ENCODE measurements at regions of chr17 and their contacts with region 1.

Region 1: GRCh38 chr17:16521070-16521727 is 29.2 kb upstream of the LRRC75A start:
- DNase-seq: peak; percentile 75
- H3K4me3 Mint-ChIP-seq: no peak overlapping the region
- H3K27ac Mint-ChIP-seq: no peak overlapping the region
- H3K4me1 Mint-ChIP-seq: peaks cover 6% of the 10 kb centered on the region
- H3K27me3 Mint-ChIP-seq: peaks cover 24% of the 10 kb centered on the region

Region 2: GRCh38 chr17:16319969-16320368 is 201.2 kb before region 1 on chr17:
- CTCF ChIA-PET with region 1: no interaction called
- POLR2A ChIA-PET with region 1: no interaction called
- intact Hi-C with region 1: no loop called
- DNase-seq: no peak
- H3K4me3 Mint-ChIP-seq: no peak overlapping the region
- H3K27ac Mint-ChIP-seq: no peak overlapping the region
- H3K4me1 Mint-ChIP-seq: no peaks in the 10 kb centered on the region
- H3K27me3 Mint-ChIP-seq: no peaks in the 10 kb centered on the region

Region 3: GRCh38 chr17:16363749-16364536 is 157.3 kb before region 1 on chr17:
- CTCF ChIA-PET with region 1: interaction called, 69 read pairs
- POLR2A ChIA-PET with region 1: no interaction called
- intact Hi-C with region 1: loop called (anchors 1 kb)
- DNase-seq: peak; percentile 86
- H3K4me3 Mint-ChIP-seq: no peak overlapping the region
- H3K27ac Mint-ChIP-seq: no peak overlapping the region
- H3K4me1 Mint-ChIP-seq: peaks cover 7% of the 10 kb centered on the region
- H3K27me3 Mint-ChIP-seq: no peaks in the 10 kb centered on the region

Region 4: GRCh38 chr17:16449121-16449570 is 72.1 kb before region 1 on chr17:
- CTCF ChIA-PET with region 1: interaction called, 113 read pairs
- POLR2A ChIA-PET with region 1: interaction called, 3 read pairs
- intact Hi-C with region 1: loop called (anchors 1 kb)
- DNase-seq: peak; percentile 29
- H3K4me3 Mint-ChIP-seq: no peak overlapping the region
- H3K27ac Mint-ChIP-seq: no peak overlapping the region
- H3K4me1 Mint-ChIP-seq: peaks cover 42% of the 10 kb centered on the region
- H3K27me3 Mint-ChIP-seq: no peaks in the 10 kb centered on the region

Region 5: DNA sequence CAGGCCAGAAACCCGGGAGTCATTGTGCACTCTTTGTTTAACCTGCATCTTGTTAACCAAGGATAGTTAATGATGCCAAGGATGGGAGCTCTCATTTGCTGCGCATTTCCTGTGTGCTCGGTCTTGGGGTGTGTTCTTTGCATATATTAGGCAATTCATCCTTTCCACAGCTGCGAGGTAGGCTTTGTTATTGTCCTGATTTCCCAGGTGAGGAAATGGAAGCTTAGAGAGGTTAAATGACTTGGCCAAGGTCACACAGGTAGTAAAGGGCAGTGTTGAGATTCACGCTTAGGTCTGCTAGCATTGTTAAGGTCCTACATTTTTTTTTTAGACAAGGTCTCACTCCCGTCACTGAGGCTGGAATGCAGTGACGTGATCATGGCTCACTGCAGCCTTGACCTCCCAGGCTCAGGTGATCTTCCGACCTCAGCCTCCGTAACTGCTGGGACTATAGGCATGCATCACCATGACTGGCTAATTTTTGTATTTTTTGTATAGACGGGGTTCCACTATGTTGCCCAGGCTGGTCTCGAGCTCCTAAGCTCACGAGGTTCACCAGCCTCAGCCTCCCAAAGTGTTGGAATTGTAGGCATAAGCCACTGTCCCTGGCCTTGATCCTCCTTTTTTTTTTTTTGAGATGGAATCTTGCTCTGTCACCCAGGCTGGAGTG is 24.2 kb before region 1 on chr17:
- CTCF ChIA-PET with region 1: interaction called, 13 read pairs
- POLR2A ChIA-PET with region 1: no interaction called
- intact Hi-C with region 1: no loop called
- DNase-seq: no peak
- H3K4me3 Mint-ChIP-seq: no peak overlapping the region
- H3K27ac Mint-ChIP-seq: no peak overlapping the region
- H3K4me1 Mint-ChIP-seq: no peaks in the 10 kb centered on the region
- H3K27me3 Mint-ChIP-seq: peaks cover 5% of the 10 kb centered on the region

Region 6: GRCh38 chr17:16573466-16573865 is 52.3 kb after region 1 on chr17:
- CTCF ChIA-PET with region 1: no interaction called
- POLR2A ChIA-PET with region 1: no interaction called
- intact Hi-C with region 1: no loop called
- DNase-seq: no peak
- H3K4me3 Mint-ChIP-seq: no peak overlapping the region
- H3K27ac Mint-ChIP-seq: no peak overlapping the region
- H3K4me1 Mint-ChIP-seq: peaks cover 4% of the 10 kb centered on the region
- H3K27me3 Mint-ChIP-seq: no peaks in the 10 kb centered on the region